Mammary epithelial cell (primary cell): ENCODE measurements at regions of chr12 and their contacts with region 1.

Region 1: DNA sequence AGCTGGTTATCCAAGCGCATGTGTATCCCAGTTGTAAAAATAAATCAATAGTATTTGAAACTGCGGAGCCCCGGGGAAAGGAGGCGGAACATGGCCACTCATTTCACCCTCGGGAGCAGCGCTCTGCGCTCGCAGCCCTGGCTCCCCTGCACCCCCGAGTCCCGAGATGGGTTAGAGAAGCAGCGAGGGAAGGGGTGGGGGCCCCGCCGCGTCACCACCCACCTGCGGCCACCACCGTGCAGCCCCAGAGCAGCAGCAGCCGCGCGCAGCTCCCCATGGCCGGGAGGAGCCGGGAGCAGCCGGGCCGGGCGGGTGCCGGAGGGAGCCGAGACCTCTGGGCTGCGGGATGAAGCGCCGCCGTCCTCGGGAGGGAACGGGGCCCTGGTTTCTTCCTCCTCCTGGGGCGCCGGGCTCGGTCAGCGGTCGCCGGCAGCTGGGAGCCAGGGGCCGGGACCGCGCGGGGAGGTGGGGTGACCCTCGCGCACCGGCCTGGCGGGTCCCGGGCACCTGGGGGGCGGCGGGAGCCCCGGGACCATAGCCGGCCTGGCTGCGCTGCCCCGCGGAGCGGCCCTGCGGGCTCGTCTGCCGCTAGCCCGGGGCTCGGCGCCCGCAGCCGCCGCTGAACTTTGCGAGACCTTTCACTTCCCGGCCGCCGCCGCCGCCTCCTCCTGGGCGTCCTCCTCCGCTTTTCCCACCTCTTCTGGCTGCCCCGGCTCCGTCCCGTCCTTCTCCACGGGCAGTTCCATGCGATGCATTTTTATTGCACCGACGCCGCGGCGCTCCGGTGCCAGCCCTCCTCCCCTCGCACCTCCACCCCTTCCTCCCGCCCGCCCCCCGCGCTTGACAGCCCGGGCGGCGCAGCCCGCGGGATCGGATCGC is at the start of gene NTN4:
- DNase-seq: peak; percentile 54
- H3K4me3 ChIP-seq: peak within 1 kb of the TSS; percentile 73 to 79 (median 78)
- H3K27ac ChIP-seq: peak within 1 kb of the TSS; percentile 58
- H3K4me1 ChIP-seq: peaks cover 29% of the 10 kb centered on the region
- H3K27me3 ChIP-seq: no peaks in the 10 kb centered on the region
- CTCF ChIP-seq: no peak
- total RNA-seq, gene NTN4: 38.6 to 47.2 TPM

Region 2: GRCh38 chr12:95611676-95612309 is 178.5 kb before region 1 on chr12:
- CTCF ChIA-PET with region 1: no interaction called
- dilution Hi-C with region 1: no loop called
- in situ Hi-C with region 1: no loop called
- intact Hi-C with region 1: no loop called
- DNase-seq: no peak
- H3K4me3 ChIP-seq: no peak overlapping the region
- H3K27ac ChIP-seq: no peak overlapping the region
- H3K4me1 ChIP-seq: peaks cover 15% of the 10 kb centered on the region
- H3K27me3 ChIP-seq: no peaks in the 10 kb centered on the region
- CTCF ChIP-seq: no peak

Region 3: DNA sequence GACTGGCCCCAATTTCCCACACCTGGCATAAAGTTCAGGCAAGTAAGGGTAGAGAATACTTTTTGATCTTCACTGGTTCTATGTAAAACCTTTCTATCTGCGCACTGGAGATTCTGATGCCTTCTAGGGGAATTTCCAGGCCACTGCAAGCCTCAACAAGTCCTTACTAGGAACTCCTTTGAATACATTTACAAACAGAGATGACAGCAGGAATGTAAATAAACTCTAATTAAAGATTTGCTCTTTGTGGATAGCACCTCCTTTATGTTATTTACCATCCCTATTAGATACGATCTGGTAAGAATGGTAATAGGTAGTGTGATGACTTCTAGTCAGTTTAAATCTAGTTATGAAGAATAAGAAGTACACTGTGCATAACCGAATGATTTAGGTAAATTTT is 68.9 kb before region 1 on chr12:
- CTCF ChIA-PET with region 1: no interaction called
- dilution Hi-C with region 1: no loop called
- in situ Hi-C with region 1: no loop called
- intact Hi-C with region 1: loop called (anchors 10 kb)
- DNase-seq: peak; percentile 71
- H3K4me3 ChIP-seq: no peak overlapping the region
- H3K27ac ChIP-seq: no peak overlapping the region
- H3K4me1 ChIP-seq: peaks cover 5% of the 10 kb centered on the region
- H3K27me3 ChIP-seq: no peaks in the 10 kb centered on the region
- CTCF ChIP-seq: peak in 1 of 2 donors; percentile 33